Gastrocnemius medialis (tissue), 4 donors: ENCODE measurements at regions of chr19 and their contacts with region 1.

Region 1: GRCh38 chr19:10896580-10897526 is 25.5 kb downstream of the CARM1 start:
- DNase-seq: peak in 1 of 2 donors; percentile 11
- ATAC-seq: peak; percentile 10 to 24
- H3K4me3 ChIP-seq: no peak overlapping the region
- H3K27ac ChIP-seq: peak overlapping the region; percentile 84 to 95 (median 90)
- H3K4me1 ChIP-seq: peaks cover 92 to 98% of the 10 kb centered on the region in 2 donors
- H3K27me3 ChIP-seq: no peaks in the 10 kb centered on the region
- CTCF ChIP-seq: no peak
- POLR2A ChIP-seq: no peak

Region 2: DNA sequence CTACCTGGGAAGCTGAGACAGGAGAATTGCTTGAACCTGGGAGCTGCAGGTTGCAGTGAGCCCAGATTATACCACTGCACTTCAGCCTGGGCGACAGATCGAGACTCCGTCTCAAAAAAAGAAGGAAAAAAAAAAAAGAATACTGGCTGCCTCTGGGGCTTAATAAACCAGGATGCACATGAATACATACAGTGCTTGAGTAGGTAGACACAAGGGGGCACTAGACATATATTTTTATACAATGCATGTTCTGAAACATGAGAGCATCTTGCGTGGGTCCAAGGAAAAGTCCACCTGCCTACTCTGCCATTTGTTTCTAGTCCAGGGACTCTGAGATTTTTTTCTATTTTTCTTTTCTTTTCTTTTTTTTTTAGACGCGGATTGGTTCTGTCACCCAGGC is 424.9 kb before region 1 on chr19:
- in situ Hi-C with region 1: no loop called
- intact Hi-C with region 1: no loop called
- DNase-seq: no peak
- ATAC-seq: no peak
- H3K4me3 ChIP-seq: no peak overlapping the region
- H3K27ac ChIP-seq: no peak overlapping the region
- H3K4me1 ChIP-seq: no peaks in the 10 kb centered on the region
- H3K27me3 ChIP-seq: no peaks in the 10 kb centered on the region
- CTCF ChIP-seq: peak in 1 of 5 experiments; percentile 27
- POLR2A ChIP-seq: no peak

Region 3: GRCh38 chr19:10878253-10878652 is 18.6 kb before region 1 on chr19:
- in situ Hi-C with region 1: no loop called
- intact Hi-C with region 1: loop called (anchors 2 kb)
- DNase-seq: no peak
- ATAC-seq: no peak
- H3K4me3 ChIP-seq: no peak overlapping the region
- H3K27ac ChIP-seq: peak overlapping the region; percentile 84 to 98 (median 92)
- H3K4me1 ChIP-seq: peaks cover 77 to 80% of the 10 kb centered on the region in 2 donors
- H3K27me3 ChIP-seq: no peaks in the 10 kb centered on the region
- CTCF ChIP-seq: no peak
- POLR2A ChIP-seq: no peak